PC-3 (cell line): ENCODE measurements at regions of chr6 and their contacts with region 1.

Region 1: DNA sequence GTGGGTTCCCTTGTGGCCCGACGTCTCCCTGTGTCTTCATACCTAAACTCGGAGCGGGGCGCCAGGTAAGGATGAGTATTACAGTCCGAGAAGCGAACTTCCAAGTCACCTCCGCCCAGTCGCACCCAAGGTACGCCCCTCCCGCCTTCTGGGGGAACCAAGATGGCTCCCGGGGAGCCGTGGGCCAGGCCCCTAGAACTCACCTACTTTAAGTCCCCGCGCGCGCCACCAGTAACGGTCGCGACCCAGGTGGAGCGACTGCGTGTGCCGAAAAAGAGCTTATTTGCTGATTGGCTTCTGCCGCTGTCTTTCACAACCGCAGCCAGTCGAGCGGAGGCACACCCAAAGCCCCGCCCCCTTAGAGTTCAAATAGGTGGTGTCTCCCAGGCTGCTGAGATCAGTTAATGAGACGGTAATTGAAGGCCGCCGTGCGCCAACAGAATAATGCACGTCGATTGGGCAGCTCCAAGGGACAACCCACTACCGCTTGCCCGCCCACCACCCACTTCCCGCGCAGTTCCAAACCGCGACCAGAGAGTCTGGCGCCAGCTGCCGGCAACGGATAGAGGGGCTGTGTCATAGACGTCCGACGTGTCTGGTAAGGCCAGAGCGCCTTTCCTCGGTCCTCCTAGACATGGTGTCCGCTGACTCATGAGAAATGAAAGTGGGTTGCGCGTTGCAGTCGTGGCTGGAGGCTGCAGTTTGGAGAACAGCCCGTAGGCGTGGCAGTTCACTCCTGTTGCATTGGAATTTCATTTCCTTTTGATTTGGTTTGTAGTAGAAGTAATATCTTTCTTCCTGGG is at the start of gene MDC1:
- DNase-seq: peak; percentile 99
- ATAC-seq: peak; percentile 76
- H3K4me3 ChIP-seq: peak within 1 kb of the TSS; percentile 71
- H3K27ac ChIP-seq: peak within 1 kb of the TSS; percentile 89
- H3K4me1 ChIP-seq: peaks cover 30% of the 10 kb centered on the region
- H3K27me3 ChIP-seq: no peaks in the 10 kb centered on the region
- CTCF ChIP-seq: no peak
- total RNA-seq, gene MDC1: 19.6 and 24.9 TPM in 2 replicates

Region 2: DNA sequence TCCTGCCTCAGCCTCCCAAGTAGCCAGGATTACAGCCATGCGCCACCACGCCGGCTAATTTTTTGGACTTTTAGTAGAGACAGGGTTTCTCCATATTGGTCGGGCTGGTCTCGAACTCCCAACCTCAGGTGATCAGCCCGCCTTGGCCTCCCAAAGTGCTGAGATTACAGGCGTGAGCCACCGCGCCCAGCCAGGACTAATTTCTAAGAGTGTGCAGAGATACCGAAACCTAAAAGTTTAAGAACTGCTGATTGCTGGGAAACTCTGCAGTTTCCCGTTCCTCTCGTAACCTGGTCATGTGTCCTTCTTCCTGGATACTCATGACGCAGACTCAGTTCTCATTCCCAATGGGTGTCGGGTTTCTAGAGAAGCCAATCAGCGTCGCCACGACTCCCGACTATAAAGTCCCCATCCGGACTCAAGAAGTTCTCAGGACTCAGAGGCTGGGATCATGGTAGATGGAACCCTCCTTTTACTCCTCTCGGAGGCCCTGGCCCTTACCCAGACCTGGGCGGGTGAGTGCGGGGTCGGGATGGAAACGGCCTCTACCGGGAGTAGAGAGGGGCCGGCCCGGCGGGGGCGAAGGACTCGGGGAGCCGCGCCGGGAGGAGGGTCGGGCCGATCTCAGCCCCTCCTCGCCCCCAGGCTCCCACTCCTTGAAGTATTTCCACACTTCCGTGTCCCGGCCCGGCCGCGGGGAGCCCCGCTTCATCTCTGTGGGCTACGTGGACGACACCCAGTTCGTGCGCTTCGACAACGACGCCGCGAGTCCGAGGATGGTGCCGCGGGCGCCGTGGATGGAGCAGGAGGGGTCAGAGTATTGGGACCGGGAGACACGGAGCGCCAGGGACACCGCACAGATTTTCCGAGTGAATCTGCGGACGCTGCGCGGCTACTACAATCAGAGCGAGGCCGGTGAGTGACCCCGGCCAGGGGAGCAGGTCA is 227.9 kb before region 1 on chr6 and contains the start of gene HLA-E:
- CTCF ChIA-PET with region 1: no interaction called
- POLR2A ChIA-PET with region 1: no interaction called
- intact Hi-C with region 1: loop called (anchors 10 kb)
- DNase-seq: peak; percentile 99
- ATAC-seq: peak; percentile 91
- H3K4me3 ChIP-seq: peak within 1 kb of the TSS; percentile 90
- H3K27ac ChIP-seq: peak within 1 kb of the TSS; percentile 38
- H3K4me1 ChIP-seq: peaks cover 8% of the 10 kb centered on the region
- H3K27me3 ChIP-seq: no peaks in the 10 kb centered on the region
- CTCF ChIP-seq: no peak
- total RNA-seq, gene HLA-E: 131 and 161 TPM in 2 replicates

Region 3: GRCh38 chr6:30541515-30542403 is 175.5 kb before region 1 on chr6:
- CTCF ChIA-PET with region 1: no interaction called
- POLR2A ChIA-PET with region 1: no interaction called
- intact Hi-C with region 1: loop called (anchors 5 kb)
- DNase-seq: peak; percentile 95
- ATAC-seq: peak; percentile 65
- H3K4me3 ChIP-seq: peak overlapping the region; percentile 68
- H3K27ac ChIP-seq: no peak overlapping the region
- H3K4me1 ChIP-seq: peaks cover 18% of the 10 kb centered on the region; the same call in 1 of the 2 replicates
- H3K27me3 ChIP-seq: no peaks in the 10 kb centered on the region
- CTCF ChIP-seq: peak; percentile 98

Region 4: GRCh38 chr6:30600451-30600961 is 116.7 kb before region 1 on chr6:
- CTCF ChIA-PET with region 1: no interaction called
- POLR2A ChIA-PET with region 1: no interaction called
- intact Hi-C with region 1: no loop called
- DNase-seq: no peak
- ATAC-seq: no peak
- H3K4me3 ChIP-seq: no peak overlapping the region
- H3K27ac ChIP-seq: no peak overlapping the region
- H3K4me1 ChIP-seq: no peaks in the 10 kb centered on the region
- H3K27me3 ChIP-seq: no peaks in the 10 kb centered on the region
- CTCF ChIP-seq: no peak

Region 5: DNA sequence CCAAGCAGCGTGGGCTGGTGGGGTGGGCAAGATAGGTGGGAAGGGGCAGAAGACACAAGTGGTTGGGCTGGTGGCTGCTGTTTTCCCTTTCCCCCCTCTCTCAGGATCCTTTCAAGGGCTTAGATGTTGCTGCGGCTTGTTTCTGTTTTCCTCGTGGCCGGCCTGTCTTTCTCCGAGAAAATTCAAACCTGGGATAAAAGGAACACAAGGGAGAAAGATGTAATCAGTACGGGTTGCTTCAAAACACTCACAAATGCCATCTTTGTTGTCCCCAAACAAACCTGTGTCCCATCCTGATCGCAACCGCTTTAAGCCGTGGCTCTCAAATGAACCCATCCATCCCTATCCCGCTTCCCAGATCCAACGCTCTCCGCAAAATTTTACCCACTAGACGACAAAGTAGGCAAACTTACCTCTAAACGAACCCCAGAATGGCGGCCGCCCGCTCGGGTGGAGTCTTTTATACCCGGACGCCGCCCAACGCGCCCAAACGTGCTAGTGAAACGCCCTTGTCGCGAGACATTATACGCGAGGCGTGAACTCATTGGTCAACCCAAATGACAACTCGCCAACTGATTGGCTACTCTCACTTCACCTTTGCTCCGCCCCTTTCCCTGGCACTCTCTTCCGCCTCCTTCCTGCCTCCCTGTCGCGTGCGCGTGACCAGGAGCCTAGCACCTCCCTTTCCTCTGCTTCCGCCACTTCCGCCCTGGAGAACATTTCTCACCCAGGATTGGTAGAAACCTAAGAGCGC is 100.3 kb before region 1 on chr6 and contains the start of gene PPP1R10:
- CTCF ChIA-PET with region 1: no interaction called
- POLR2A ChIA-PET with region 1: interaction called, 3 read pairs
- intact Hi-C with region 1: loop called (anchors 1 kb)
- DNase-seq: peak; percentile 100
- ATAC-seq: peak; percentile 73
- H3K4me3 ChIP-seq: peak within 1 kb of the TSS; percentile 86
- H3K27ac ChIP-seq: peak within 1 kb of the TSS; percentile 92
- H3K4me1 ChIP-seq: peaks cover 40% of the 10 kb centered on the region
- H3K27me3 ChIP-seq: no peaks in the 10 kb centered on the region
- CTCF ChIP-seq: no peak
- total RNA-seq, gene PPP1R10: 44.2 and 44.5 TPM in 2 replicates

Region 6: DNA sequence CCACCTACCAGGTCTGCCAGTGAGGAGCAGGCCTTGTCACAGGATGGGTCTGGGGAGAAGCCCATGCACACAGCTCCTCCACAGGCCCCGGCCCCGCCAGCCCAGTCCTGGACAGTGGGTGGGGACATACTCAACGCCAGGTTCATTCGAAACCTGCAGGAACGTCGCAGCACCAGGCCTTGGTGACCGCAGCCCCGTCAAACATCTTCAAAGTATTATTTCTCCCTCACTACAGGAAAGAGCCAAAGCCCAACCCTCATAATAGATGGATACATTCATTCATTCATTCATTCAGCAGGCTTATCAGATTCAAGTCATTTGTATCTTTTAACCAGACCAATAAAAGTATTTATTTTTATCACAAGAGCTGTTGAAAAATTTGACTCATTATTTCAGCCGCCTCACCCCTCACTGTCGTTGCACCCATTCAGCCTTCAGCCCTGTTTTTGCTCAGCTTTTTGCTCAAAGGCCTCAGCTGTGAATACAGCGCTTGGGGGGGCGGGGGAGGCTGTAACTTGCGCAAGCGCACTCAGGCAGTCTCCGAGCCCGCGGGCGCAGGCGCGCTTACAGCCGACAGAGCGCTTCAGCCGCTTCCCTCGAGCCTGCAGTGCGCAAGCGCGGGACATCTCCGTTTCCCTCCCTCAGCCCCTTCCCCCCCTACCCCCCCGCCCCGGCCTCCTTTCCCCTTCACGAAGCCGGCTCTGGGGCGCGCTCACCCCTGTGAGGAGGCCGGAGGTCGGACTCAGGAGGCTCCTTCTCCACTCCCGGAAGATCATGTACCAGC is 70.6 kb before region 1 on chr6 and contains the start of gene C6orf136:
- CTCF ChIA-PET with region 1: no interaction called
- POLR2A ChIA-PET with region 1: no interaction called
- intact Hi-C with region 1: loop called (anchors 2 kb)
- DNase-seq: peak; percentile 93
- ATAC-seq: peak; percentile 74
- H3K4me3 ChIP-seq: peak within 1 kb of the TSS; percentile 82
- H3K27ac ChIP-seq: peak within 1 kb of the TSS; percentile 55
- H3K4me1 ChIP-seq: peaks cover 11% of the 10 kb centered on the region
- H3K27me3 ChIP-seq: no peaks in the 10 kb centered on the region
- CTCF ChIP-seq: no peak
- total RNA-seq, gene C6orf136: 10.6 and 18.7 TPM in 2 replicates

Region 7: GRCh38 chr6:30686908-30687658 is 30.2 kb before region 1 on chr6:
- CTCF ChIA-PET with region 1: interaction called, 4 read pairs
- POLR2A ChIA-PET with region 1: interaction called, 7 read pairs
- intact Hi-C with region 1: loop called (anchors 1 kb)
- DNase-seq: peak; percentile 96
- ATAC-seq: peak; percentile 58
- H3K4me3 ChIP-seq: peak overlapping the region; percentile 97
- H3K27ac ChIP-seq: peak overlapping the region; percentile 96
- H3K4me1 ChIP-seq: peaks cover 66% of the 10 kb centered on the region
- H3K27me3 ChIP-seq: no peaks in the 10 kb centered on the region
- CTCF ChIP-seq: no peak